ENCODE measurements at regions of chr21 and their contacts with region 1.

Region 1: DNA sequence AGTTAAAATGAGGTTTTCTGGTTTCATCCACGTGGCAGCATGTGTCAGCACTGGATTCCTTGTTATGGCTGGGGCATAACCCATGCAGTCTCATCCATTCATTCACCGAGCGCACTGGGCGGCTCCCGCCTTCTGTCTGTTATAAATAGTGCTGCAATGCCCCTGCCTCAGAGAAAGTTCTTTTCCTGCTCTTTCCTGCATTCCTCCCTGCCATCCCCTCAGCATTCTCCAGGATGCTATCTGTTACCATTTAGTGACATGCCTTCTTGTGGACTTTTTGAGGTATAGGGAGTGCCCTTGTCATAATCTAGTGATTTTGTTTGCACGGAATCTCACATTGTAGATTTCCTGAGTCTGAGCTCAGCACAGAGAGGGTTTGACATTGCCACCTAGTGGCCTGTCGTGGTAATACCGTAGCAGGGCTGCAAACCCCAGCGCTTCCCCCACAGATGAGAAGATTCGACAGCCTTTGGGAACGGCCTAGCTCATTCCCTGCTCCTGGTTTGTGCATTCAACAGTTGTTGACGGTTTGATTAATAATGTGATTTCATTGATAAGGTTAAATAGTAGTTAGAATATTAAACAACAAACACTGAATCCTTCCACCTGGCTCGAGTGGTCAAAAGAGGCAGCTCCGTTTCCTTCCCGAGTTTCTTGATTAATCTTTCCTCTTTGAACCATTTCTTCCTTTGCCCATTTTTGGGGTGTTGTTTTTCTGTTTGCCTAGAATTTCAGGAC is 46.3 kb downstream of the UMODL1 start:
- DNase-seq: peak in 1 of 2 experiments; percentile 93
- H3K4me3 ChIP-seq: no peak overlapping the region
- H3K27ac ChIP-seq: no peak overlapping the region
- H3K4me1 ChIP-seq: peaks cover 0 to under 1% (median under 1%) of the 10 kb centered on the region in 4 experiments; a peak in 1 of 7 replicates
- H3K27me3 ChIP-seq: no peaks in the 10 kb centered on the region; a peak in 2 of 7 replicates
- CTCF ChIP-seq: peak; percentile 74 to 95 (median 79)
- EP300 ChIP-seq: no peak
- POLR2A ChIP-seq: no peak
- RAD21 ChIP-seq: peak; percentile 84 to 89

Region 2: GRCh38 chr21:42080788-42081083 is 36.7 kb before region 1 on chr21:
- CTCF ChIA-PET with region 1: interaction called, 11 read pairs
- POLR2A ChIA-PET with region 1: no interaction called
- DNase-seq: no peak
- H3K4me3 ChIP-seq: no peak overlapping the region
- H3K27ac ChIP-seq: no peak overlapping the region
- H3K4me1 ChIP-seq: no peaks in the 10 kb centered on the region
- H3K27me3 ChIP-seq: no peaks in the 10 kb centered on the region
- CTCF ChIP-seq: no peak
- EP300 ChIP-seq: no peak
- POLR2A ChIP-seq: no peak
- RAD21 ChIP-seq: no peak

Region 3: DNA sequence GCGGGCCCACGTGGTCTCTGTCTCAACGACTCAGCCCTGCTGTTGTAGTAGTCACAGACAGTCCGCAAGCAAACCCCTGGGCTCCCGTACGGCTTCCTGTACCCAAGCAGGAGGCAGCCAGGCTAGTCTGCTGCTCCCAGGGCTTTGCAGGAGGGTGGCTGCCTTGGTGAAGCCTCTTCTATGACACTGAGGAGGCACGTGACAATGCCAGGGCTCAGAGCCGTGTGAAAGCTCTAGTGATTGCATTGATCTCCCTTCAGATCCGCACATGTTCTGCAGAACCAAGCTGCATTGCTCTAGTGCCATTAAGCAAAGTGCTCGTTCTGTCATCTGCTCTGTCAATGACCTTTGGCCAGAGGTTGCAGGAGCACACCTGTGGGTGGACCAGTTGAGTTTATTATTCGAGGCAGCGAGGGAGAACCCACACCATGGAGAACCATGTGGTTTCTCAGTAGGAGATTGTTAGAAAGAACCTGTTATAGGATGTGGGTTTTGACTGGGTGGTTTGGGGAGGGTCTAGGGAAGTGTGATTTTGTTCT is 28.2 kb before region 1 on chr21:
- CTCF ChIA-PET with region 1: interaction called, 19 read pairs
- POLR2A ChIA-PET with region 1: no interaction called
- DNase-seq: no peak
- H3K4me3 ChIP-seq: no peak overlapping the region
- H3K27ac ChIP-seq: no peak overlapping the region
- H3K4me1 ChIP-seq: peaks cover 0 to 9% (median 5%) of the 10 kb centered on the region in 4 experiments; a peak in 5 of 7 replicates
- H3K27me3 ChIP-seq: peaks cover 0 to 6% (median 3%) of the 10 kb centered on the region in 4 experiments; a peak in 5 of 7 replicates
- CTCF ChIP-seq: no peak
- EP300 ChIP-seq: no peak
- POLR2A ChIP-seq: no peak
- RAD21 ChIP-seq: no peak

Region 4: GRCh38 chr21:42097860-42098454 is 19.4 kb before region 1 on chr21:
- CTCF ChIA-PET with region 1: interaction called, 19 read pairs
- POLR2A ChIA-PET with region 1: no interaction called
- DNase-seq: no peak
- H3K4me3 ChIP-seq: no peak overlapping the region
- H3K27ac ChIP-seq: no peak overlapping the region
- H3K4me1 ChIP-seq: no peaks in the 10 kb centered on the region
- H3K27me3 ChIP-seq: no peaks in the 10 kb centered on the region
- CTCF ChIP-seq: no peak
- EP300 ChIP-seq: no peak
- POLR2A ChIP-seq: no peak
- RAD21 ChIP-seq: no peak

Region 5: GRCh38 chr21:42102990-42103389 is 14.4 kb before region 1 on chr21:
- CTCF ChIA-PET with region 1: interaction called, 40 read pairs
- POLR2A ChIA-PET with region 1: no interaction called
- DNase-seq: no peak
- H3K4me3 ChIP-seq: no peak overlapping the region
- H3K27ac ChIP-seq: no peak overlapping the region
- H3K4me1 ChIP-seq: peaks cover 0 to 7% (median 1%) of the 10 kb centered on the region in 4 experiments; a peak in 2 of 7 replicates
- H3K27me3 ChIP-seq: no peaks in the 10 kb centered on the region
- CTCF ChIP-seq: no peak
- EP300 ChIP-seq: no peak
- POLR2A ChIP-seq: no peak
- RAD21 ChIP-seq: no peak

Region 6: DNA sequence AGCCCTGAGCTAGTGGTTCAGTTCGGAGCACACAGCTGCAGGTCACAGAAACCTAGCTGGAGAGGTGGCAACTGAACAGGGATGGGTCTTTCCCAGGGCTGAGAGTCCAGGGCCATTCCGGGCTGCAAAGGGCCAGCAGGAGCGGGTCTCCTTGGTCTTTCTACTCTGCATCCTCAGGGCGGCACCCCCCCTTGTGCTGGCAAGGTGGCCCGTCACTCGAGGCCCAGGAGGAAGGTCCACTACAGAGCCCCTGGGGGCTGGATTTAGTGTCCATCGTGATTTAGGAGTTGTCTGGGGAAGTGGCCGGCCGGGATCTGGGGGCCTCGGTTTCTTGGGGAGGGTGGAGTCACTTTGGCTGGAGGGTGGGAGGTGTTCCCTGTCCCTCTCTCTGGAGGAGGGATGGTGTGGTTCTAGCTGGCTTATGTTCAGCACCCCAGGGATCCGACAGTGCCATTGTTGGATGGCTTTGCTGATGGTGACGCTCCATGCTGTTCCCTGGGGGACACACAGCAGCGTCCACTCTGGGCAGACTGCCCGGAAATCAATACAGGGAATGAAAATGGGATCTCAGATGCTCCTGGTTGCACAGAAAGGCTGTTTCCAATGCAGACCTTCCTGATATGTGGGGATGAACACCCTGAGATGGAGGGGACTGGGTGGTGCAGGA is 18.1 kb after region 1 on chr21:
- CTCF ChIA-PET with region 1: interaction called, 11 read pairs
- POLR2A ChIA-PET with region 1: no interaction called
- DNase-seq: no peak
- H3K4me3 ChIP-seq: no peak overlapping the region
- H3K27ac ChIP-seq: no peak overlapping the region
- H3K4me1 ChIP-seq: no peaks in the 10 kb centered on the region
- H3K27me3 ChIP-seq: no peaks in the 10 kb centered on the region
- CTCF ChIP-seq: no peak
- EP300 ChIP-seq: no peak
- POLR2A ChIP-seq: no peak
- RAD21 ChIP-seq: no peak